HEK293 (cell line): ENCODE measurements at regions of chr2 and their contacts with region 1.

Region 1: DNA sequence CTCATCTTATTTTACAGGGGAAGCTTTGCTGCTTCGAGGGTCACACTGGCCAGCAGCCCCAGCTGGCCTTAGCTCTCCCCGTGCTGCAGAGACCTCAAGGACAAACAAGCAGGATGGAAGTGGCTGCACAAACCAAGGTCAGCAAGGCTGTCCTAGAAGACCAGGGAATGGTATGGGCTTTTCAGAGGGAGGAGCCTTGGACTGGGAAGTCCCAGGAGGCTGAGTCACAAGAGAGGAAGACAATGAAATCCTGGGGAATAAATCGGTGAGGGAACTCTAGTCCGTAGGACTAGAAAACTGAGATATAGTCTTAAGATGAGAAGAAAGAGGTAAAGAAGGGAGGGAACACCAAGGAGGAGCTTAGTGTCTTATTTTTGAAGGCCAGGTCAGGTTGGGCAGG is 15.7 kb downstream of the CREG2 start:
- H3K4me3 ChIP-seq: no peak overlapping the region
- H3K27ac ChIP-seq: no peak overlapping the region
- H3K4me1 ChIP-seq: no peaks in the 10 kb centered on the region
- CTCF ChIP-seq: no peak

Region 2: GRCh38 chr2:101277113-101277512 is 94.5 kb before region 1 on chr2:
- CTCF ChIA-PET with region 1: no interaction called
- POLR2A ChIA-PET with region 1: no interaction called
- H3K4me3 ChIP-seq: no peak overlapping the region
- H3K27ac ChIP-seq: no peak overlapping the region
- H3K4me1 ChIP-seq: no peaks in the 10 kb centered on the region
- CTCF ChIP-seq: no peak

Region 3: GRCh38 chr2:101328474-101329007 is 43.1 kb before region 1 on chr2:
- CTCF ChIA-PET with region 1: no interaction called
- POLR2A ChIA-PET with region 1: no interaction called
- H3K4me3 ChIP-seq: no peak overlapping the region
- H3K27ac ChIP-seq: no peak overlapping the region
- H3K4me1 ChIP-seq: no peaks in the 10 kb centered on the region
- CTCF ChIP-seq: no peak

Region 4: GRCh38 chr2:101349893-101350662 is 21.6 kb before region 1 on chr2:
- CTCF ChIA-PET with region 1: interaction called, 11 read pairs
- POLR2A ChIA-PET with region 1: no interaction called
- H3K4me3 ChIP-seq: no peak overlapping the region
- H3K27ac ChIP-seq: no peak overlapping the region
- H3K4me1 ChIP-seq: no peaks in the 10 kb centered on the region
- CTCF ChIP-seq: no peak